Vagina (tissue), 2 donors: ENCODE measurements at regions of chr1 and their contacts with region 1.

Region 1: DNA sequence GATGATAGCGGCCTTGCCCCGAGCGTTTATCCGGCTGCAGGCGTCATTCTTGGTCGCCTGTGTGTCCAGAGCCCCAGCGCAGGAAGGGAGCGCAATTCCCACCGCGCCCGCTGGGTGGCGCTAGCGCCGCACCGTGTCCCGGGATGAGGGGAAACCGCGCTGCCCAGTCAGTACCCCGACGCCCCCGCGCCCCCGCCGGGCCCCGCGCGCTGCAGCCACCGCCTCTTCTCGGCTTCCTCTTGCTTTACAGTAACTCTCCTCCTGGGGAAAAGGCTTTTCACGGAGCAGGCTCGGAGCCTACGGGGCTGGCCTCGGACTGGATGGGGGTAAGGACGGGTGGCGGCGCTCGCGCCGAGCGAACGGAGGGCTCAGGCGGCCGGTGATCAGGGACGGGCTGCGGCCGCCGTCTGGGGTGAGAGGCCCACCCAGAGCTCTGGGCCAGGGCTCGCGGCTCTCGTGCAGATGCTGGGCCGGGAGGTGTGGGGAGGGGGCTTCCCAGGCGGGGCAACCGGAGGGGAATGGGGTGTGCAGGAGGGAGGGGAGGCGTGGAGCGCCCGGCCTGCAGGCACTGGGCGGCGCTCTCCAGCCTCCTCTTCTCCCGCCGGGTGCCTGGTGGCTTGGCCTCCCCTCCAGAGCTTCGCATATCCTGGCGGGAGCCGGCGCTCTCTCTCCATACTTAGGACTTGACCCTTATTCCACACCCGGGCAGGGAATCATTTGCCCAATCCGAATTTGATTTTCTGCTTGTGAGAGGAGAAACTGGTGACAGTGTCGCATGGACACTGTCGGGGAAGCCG is 29.8 kb downstream of the TEX35 start:
- DNase-seq: peak in 1 of 2 donors; percentile 95
- H3K4me3 ChIP-seq: peak overlapping the region; percentile 62 to 93
- H3K27ac ChIP-seq: peak overlapping the region; percentile 86
- H3K4me1 ChIP-seq: peaks cover 45% of the 10 kb centered on the region
- H3K27me3 ChIP-seq: no peaks in the 10 kb centered on the region
- CTCF ChIP-seq: peak; percentile 82 to 99 (median 95)
- POLR2A ChIP-seq: no peak

Region 2: GRCh38 chr1:178354816-178355215 is 187.9 kb before region 1 on chr1:
- intact Hi-C with region 1: no loop called
- DNase-seq: no peak
- H3K4me3 ChIP-seq: no peak overlapping the region
- H3K27ac ChIP-seq: no peak overlapping the region
- H3K4me1 ChIP-seq: no peaks in the 10 kb centered on the region
- H3K27me3 ChIP-seq: no peaks in the 10 kb centered on the region
- CTCF ChIP-seq: no peak
- POLR2A ChIP-seq: no peak

Region 3: GRCh38 chr1:178752891-178753290 is 210.1 kb after region 1 on chr1:
- intact Hi-C with region 1: loop called (anchors 2 kb)
- DNase-seq: no peak
- H3K4me3 ChIP-seq: no peak overlapping the region
- H3K27ac ChIP-seq: no peak overlapping the region
- H3K4me1 ChIP-seq: no peaks in the 10 kb centered on the region
- H3K27me3 ChIP-seq: no peaks in the 10 kb centered on the region
- CTCF ChIP-seq: no peak
- POLR2A ChIP-seq: no peak